ENCODE measurements at regions of chr4 and their contacts with region 1.

Region 1: DNA sequence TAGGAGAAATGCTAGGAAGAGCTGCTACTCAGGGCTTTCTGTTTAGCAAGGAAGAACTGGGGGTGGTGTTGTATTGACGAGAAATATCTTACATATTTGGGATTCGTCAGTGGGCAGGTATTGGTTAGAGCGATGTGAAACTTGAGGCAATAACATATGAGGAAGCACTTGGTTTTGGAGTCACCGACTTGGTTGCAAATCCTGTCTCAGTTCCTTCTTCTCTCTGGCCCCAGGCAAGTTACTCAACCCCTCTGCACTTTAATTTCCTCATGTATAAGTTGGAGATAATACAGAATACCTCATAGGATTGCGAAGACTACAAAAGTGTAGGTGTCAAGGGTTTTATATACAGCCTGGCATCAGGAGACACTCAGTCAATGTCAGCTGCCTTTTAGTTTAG is 34.1 kb downstream of the GPAT3 start:
- DNase-seq: no peak
- H3K4me3 ChIP-seq: no peak overlapping the region
- H3K27ac ChIP-seq: no peak overlapping the region
- H3K4me1 ChIP-seq: no peaks in the 10 kb centered on the region
- H3K27me3 ChIP-seq: no peaks in the 10 kb centered on the region
- CTCF ChIP-seq: no peak
- EP300 ChIP-seq: no peak
- POLR2A ChIP-seq: no peak

Region 2: DNA sequence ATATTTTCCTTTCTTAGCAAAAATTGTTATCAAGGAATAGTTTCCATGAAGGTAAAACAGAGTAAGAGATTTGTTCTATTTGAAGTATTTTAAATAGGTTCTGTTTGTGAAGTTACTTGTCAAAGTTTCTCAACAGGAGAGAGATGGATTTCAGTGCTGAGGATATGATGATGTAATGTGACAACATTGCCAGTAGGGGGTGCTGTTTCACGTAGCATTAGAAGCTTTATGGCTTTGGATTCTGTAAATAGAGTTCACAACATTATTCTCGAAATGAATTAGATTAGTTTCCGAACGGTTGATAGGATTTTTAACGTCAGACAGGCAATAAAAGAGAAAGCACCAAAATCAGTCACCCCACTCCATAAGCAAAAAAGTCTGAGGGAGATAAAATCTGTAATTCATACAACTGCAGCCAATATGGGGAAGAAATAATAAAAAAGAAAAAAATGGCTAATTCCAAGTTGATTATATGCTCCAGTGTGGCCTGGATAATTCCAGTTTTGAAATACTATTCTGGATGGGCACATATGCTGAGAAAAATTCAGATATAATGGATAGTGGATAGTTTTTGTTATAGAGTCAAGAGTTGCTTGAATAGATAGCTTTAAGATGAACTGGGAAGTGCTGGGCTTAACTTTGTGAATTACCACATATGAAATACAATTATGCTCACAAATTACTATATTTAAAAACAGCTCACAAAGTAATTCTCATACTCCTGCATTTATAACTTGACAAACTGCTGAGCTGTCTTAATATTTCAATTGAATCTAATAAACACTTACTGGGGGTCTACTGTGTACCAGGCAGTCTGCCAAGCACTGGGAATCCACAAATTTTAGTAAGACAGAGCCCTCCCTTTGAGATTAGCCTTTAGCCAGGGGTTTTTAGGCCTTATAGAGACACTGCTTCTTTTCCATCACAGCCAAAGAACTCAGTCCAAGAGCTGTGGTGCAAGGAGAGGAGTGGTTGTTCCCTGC is 75.0 kb after region 1 on chr4:
- intact Hi-C with region 1: no loop called
- DNase-seq: no peak
- H3K4me3 ChIP-seq: no peak overlapping the region
- H3K27ac ChIP-seq: no peak overlapping the region
- H3K4me1 ChIP-seq: no peaks in the 10 kb centered on the region
- H3K27me3 ChIP-seq: no peaks in the 10 kb centered on the region
- CTCF ChIP-seq: peak; percentile 69 to 79 (median 73)
- EP300 ChIP-seq: no peak
- POLR2A ChIP-seq: no peak

Region 3: DNA sequence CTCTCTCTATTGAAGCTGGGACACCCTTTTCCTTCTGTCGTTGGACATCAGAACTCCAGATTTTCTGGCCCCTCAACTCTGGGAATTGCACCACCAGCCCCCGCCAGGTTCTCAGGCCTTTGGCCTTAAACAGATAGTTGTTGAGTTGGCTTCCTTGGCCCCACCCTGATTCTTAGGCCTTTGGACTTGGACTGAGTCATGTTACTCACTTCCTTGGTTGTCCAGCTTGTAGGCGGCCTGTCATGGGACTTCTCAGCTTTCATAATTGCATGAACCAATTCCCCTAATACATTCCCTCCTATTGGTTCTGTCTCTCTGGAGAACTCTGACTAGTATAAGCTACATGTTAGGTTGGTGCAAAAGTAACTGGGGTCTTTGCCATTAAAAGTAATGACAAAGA is 161.6 kb after region 1 on chr4:
- intact Hi-C with region 1: no loop called
- DNase-seq: no peak
- H3K4me3 ChIP-seq: no peak overlapping the region
- H3K27ac ChIP-seq: no peak overlapping the region
- H3K4me1 ChIP-seq: no peaks in the 10 kb centered on the region
- H3K27me3 ChIP-seq: no peaks in the 10 kb centered on the region
- CTCF ChIP-seq: no peak
- EP300 ChIP-seq: no peak
- POLR2A ChIP-seq: no peak

Region 4: DNA sequence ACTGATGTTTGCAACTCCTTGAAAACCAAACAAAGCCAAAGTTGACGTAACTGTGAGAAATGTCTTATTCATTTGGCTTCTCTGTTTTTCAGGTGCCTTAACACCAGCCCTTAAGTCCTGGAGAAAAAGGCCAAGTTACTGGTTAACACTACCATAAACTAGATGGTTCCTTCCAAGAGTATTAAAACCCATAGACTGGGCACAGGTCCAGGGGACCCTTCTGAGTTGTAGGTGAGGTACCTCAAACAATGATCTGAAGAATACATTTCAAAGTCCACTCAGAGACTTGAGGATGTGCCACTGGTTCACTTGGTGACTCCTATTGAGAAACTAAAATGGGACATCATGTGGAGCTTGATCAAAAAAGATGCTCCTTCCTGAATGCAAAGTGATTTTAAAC is 842.1 kb after region 1 on chr4:
- intact Hi-C with region 1: loop called in 1 of 4 experiments (anchors 5 kb)
- DNase-seq: no peak
- H3K4me3 ChIP-seq: no peak overlapping the region
- H3K27ac ChIP-seq: no peak overlapping the region
- H3K4me1 ChIP-seq: no peaks in the 10 kb centered on the region
- H3K27me3 ChIP-seq: no peaks in the 10 kb centered on the region
- CTCF ChIP-seq: no peak
- EP300 ChIP-seq: no peak
- POLR2A ChIP-seq: no peak

Measured in ovary (tissue), 10 donors.